Left colon (tissue), 2 donors: ENCODE measurements at regions of chr2 and their contacts with region 1.

Region 1: GRCh38 chr2:216807857-216808272 is 52.0 kb downstream of the TNP1 start:
- DNase-seq: no peak
- ATAC-seq: no peak

Region 2: GRCh38 chr2:217501887-217502286 is 694.0 kb after region 1 on chr2:
- intact Hi-C with region 1: loop called in 1 of 2 experiments (anchors 10 kb)
- DNase-seq: no peak
- ATAC-seq: no peak